ENCODE measurements at regions of chr5 and their contacts with region 1.

Region 1: GRCh38 chr5:135729321-135729786 is 105.1 kb upstream of the SLC25A48 start:
- DNase-seq: no peak
- H3K4me3 Mint-ChIP-seq: no peak overlapping the region
- H3K27ac Mint-ChIP-seq: no peak overlapping the region
- H3K4me1 Mint-ChIP-seq: no peaks in the 10 kb centered on the region
- H3K27me3 Mint-ChIP-seq: peaks cover 26% of the 10 kb centered on the region
- CTCF ChIP-seq: no peak

Region 2: GRCh38 chr5:135466178-135467050 is 262.9 kb before region 1 on chr5:
- CTCF ChIA-PET with region 1: interaction called, 3 read pairs
- intact Hi-C with region 1: loop called (anchors 5 kb)
- DNase-seq: peak; percentile 87
- H3K4me3 Mint-ChIP-seq: peak overlapping the region; percentile 51
- H3K27ac Mint-ChIP-seq: no peak overlapping the region
- H3K4me1 Mint-ChIP-seq: peaks cover 8% of the 10 kb centered on the region
- H3K27me3 Mint-ChIP-seq: peaks cover 14% of the 10 kb centered on the region
- CTCF ChIP-seq: peak; percentile 88

Region 3: DNA sequence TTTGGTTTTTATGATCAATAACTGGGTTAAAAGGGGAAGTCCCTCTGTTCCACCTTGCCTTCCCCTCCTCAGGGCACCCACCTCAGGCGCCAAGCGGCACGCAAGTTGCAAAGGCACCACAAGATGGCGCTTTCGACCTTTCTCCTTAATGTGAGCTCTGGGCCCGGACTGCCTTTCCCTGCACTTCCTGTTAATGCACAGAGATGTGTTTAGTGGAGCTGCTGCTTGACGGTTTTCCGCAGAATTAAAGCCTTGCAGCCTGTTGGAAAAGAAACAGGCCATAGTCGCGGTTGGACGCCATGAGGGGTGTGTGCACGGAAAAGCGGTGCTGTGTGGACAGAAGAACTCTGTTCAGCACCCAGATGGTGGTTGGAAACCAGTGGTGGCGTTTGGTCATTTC is 168.5 kb before region 1 on chr5:
- CTCF ChIA-PET with region 1: interaction called, 34 read pairs
- intact Hi-C with region 1: loop called (anchors 1 kb)
- DNase-seq: peak; percentile 91
- H3K4me3 Mint-ChIP-seq: no peak overlapping the region
- H3K27ac Mint-ChIP-seq: no peak overlapping the region
- H3K4me1 Mint-ChIP-seq: peaks cover 8% of the 10 kb centered on the region
- H3K27me3 Mint-ChIP-seq: peaks cover 60% of the 10 kb centered on the region
- CTCF ChIP-seq: peak; percentile 73